Posterior cingulate gyrus (tissue), 11 donors: ENCODE measurements at regions of chr6 and their contacts with region 1.

Region 1: GRCh38 chr6:33317669-33318425 is at the start of gene ZBTB22:
- DNase-seq: peak; percentile 93 to 99 (median 97)

Region 2: GRCh38 chr6:33197431-33198048 is 120.3 kb before region 1 on chr6:
- intact Hi-C with region 1: no loop called
- DNase-seq: peak in 1 of 10 donors; percentile 42

Region 3: DNA sequence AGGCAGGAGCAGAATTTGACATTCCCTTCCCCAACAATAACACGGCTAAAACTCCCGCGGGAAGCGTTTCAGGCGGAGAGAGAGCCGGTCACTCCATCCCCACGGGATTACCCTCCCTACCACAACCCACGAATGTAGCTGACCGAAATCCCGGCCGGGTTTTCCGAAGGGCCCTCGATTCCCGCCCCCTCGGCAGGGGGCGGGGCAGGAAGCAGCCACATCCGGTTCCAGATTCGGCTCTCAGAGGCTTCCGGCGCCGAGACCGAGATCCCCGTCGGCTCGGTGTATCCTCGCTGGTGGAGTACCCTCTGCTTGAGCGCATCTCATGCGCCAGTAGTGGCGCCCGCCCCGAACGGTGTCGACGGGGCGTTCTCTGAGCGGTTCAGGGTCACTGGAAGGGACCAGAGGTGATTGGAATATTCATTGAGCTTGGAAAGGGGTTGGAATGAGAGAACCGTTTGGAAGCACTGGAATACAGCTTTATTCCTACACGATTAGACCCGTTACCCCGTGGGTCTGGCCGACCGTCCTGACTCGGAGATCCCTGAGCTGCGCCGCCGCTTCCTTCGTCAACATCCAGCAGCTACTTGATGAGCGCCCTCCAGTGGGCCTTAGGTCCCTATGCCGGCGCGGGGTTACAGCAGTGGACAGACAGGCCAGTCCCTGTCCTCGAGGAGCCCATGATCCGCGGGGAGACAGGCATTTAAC is 18.5 kb before region 1 on chr6:
- intact Hi-C with region 1: loop called (anchors 2 kb)
- DNase-seq: peak; percentile 87 to 98 (median 91)

Region 4: GRCh38 chr6:33417903-33418689 is 100.2 kb after region 1 on chr6 and contains the start of gene CUTA:
- intact Hi-C with region 1: loop called (anchors 10 kb)
- DNase-seq: peak; percentile 99 to 100 (median 100)